GM12878 (cell line): ENCODE measurements at regions of chr11 and their contacts with region 1.

Region 1: GRCh38 chr11:74570266-74571061 is 21.9 kb upstream of the POLD3 start:
- DNase-seq: no peak
- ATAC-seq: peak; percentile 88
- H3K4me3 ChIP-seq: no peak overlapping the region
- H3K27ac ChIP-seq: no peak overlapping the region
- H3K4me1 ChIP-seq: no peaks in the 10 kb centered on the region
- H3K27me3 ChIP-seq: no peaks in the 10 kb centered on the region
- CTCF ChIP-seq: peak; percentile 52 to 76 (median 62); a peak in 5 of 6 replicates
- EP300 ChIP-seq: no peak
- POLR2A ChIP-seq: no peak
- RAD21 ChIP-seq: peak; percentile 74

Region 2: GRCh38 chr11:74388678-74389327 is 181.7 kb before region 1 on chr11:
- CTCF ChIA-PET with region 1: interaction called, 31 read pairs
- POLR2A ChIA-PET with region 1: no interaction called
- RAD21 ChIA-PET with region 1: interaction called, 5 read pairs
- SMC1A ChIA-PET with region 1: interaction called, 4 read pairs
- in situ Hi-C with region 1: no loop called
- intact Hi-C with region 1: loop called (anchors 2 kb)
- DNase-seq: peak; percentile 8
- ATAC-seq: peak; percentile 95
- H3K4me3 ChIP-seq: no peak overlapping the region
- H3K27ac ChIP-seq: no peak overlapping the region
- H3K4me1 ChIP-seq: no peaks in the 10 kb centered on the region
- H3K27me3 ChIP-seq: no peaks in the 10 kb centered on the region
- CTCF ChIP-seq: peak; percentile 66 to 73 (median 69); a peak in 5 of 6 replicates
- EP300 ChIP-seq: no peak
- POLR2A ChIP-seq: no peak
- RAD21 ChIP-seq: peak; percentile 73

Region 3: DNA sequence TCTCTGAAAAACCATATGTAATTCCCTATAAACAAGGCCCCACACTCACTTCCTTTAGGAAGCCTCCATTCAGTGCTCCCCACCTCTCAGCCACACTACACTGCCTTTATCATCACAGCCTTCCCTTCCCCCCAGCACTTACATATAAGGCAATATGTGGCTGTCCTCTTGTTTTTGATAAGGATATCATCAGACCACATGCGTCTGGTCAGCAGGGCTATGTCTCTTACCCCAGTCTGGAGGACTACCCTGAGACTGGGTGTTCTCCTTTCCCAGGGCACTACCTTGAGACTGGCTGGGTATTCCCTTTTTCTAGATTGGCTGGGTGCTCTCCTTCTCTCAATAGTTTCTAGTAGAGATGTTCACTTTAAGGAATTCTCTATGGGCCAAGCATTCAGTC is 110.9 kb before region 1 on chr11:
- CTCF ChIA-PET with region 1: interaction called, 122 read pairs
- POLR2A ChIA-PET with region 1: no interaction called
- RAD21 ChIA-PET with region 1: interaction called, 35 read pairs
- SMC1A ChIA-PET with region 1: interaction called, 66 read pairs
- in situ Hi-C with region 1: loop called (anchors 5 kb)
- intact Hi-C with region 1: no loop called
- DNase-seq: no peak
- ATAC-seq: no peak
- H3K4me3 ChIP-seq: no peak overlapping the region
- H3K27ac ChIP-seq: no peak overlapping the region
- H3K4me1 ChIP-seq: no peaks in the 10 kb centered on the region
- H3K27me3 ChIP-seq: no peaks in the 10 kb centered on the region; a peak in 2 of 4 replicates
- CTCF ChIP-seq: no peak
- EP300 ChIP-seq: no peak
- POLR2A ChIP-seq: no peak
- RAD21 ChIP-seq: no peak